Heart right ventricle (tissue), 16 donors: ENCODE measurements at regions of chr9 and their contacts with region 1.

Region 1: GRCh38 chr9:2047144-2047671 is 32.1 kb downstream of the SMARCA2 start:
- DNase-seq: no peak
- ATAC-seq: no peak
- H3K4me3 ChIP-seq: no peak overlapping the region
- H3K27ac ChIP-seq: no peak overlapping the region
- H3K4me1 ChIP-seq: peaks cover 0 to 29% (median 5%) of the 10 kb centered on the region in 9 donors
- H3K27me3 ChIP-seq: no peaks in the 10 kb centered on the region
- CTCF ChIP-seq: no peak

Region 2: GRCh38 chr9:1939926-1940368 is 107.3 kb before region 1 on chr9:
- intact Hi-C with region 1: no loop called
- DNase-seq: no peak
- ATAC-seq: peak in 1 of 8 donors; percentile 31
- H3K4me3 ChIP-seq: no peak overlapping the region
- H3K27ac ChIP-seq: no peak overlapping the region
- H3K4me1 ChIP-seq: no peaks in the 10 kb centered on the region
- H3K27me3 ChIP-seq: peaks cover 0 to 7% (median 0%) of the 10 kb centered on the region in 7 donors
- CTCF ChIP-seq: peak in 8 of 9 donors; percentile 26 to 63 (median 56)

Region 3: DNA sequence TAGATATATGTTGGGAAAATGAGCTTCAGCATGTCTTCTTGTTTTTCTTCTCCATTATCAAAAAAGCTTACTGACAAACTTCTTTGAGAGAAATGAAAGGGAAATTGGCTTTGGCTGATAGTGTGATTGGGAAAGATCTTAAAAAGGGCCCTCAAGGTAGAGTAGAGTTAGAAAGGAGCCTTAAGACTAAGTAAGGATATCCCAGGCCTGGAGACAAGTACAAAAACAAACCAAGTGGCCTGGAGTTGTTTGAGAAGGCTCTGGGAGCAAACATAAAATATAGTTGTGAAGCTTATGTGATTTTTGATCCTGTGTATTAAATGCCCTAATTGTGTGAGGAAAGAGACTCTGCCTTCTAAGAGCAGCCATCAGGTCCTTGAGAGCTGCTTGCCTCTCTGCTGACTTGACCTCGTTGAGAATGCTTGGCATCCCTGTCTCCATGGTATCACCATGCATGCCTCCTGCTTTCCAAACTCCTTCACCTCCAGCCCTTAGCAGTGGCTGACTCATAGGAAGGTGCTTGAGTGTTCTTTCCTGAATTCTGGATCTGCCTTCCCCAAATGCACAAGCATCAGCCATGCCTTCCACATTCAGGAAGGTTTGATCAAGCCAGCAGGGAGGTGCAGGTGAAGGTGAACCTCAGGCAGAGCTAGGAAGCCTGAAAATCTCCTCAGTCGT is 46.9 kb after region 1 on chr9:
- intact Hi-C with region 1: no loop called
- DNase-seq: no peak
- ATAC-seq: peak in 3 of 8 donors; percentile 24 to 86 (median 26)
- H3K4me3 ChIP-seq: no peak overlapping the region
- H3K27ac ChIP-seq: no peak overlapping the region
- H3K4me1 ChIP-seq: peaks cover 0 to 21% (median 0%) of the 10 kb centered on the region in 9 donors
- H3K27me3 ChIP-seq: no peaks in the 10 kb centered on the region
- CTCF ChIP-seq: no peak

Region 4: DNA sequence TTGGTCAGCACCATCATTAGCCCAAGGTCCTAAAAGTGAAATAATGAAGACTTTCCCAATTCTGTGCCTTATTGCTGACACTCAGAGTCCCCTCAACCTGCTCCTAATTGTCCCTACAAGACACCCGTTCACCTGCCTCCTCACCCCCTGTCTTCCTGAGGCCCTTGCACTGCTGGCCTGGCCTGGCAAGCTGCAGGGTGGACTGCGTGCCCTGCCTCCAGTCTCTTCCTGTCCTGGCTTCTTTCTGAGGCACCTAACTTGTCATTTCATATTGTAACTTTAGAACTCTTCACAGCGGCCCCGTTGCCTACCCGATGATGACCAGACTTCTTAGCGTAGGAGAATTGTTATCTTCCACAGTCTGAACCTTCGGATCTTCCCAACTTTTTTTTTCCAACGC is 121.8 kb after region 1 on chr9:
- intact Hi-C with region 1: loop called in 1 of 10 experiments (anchors 5 kb)
- DNase-seq: no peak
- ATAC-seq: peak in 6 of 8 donors; percentile 29 to 64 (median 44)
- H3K4me3 ChIP-seq: no peak overlapping the region
- H3K27ac ChIP-seq: no peak overlapping the region
- H3K4me1 ChIP-seq: peaks cover 0 to 30% (median 4%) of the 10 kb centered on the region in 9 donors
- H3K27me3 ChIP-seq: no peaks in the 10 kb centered on the region
- CTCF ChIP-seq: no peak